ENCODE measurements at regions of chr1 and their contacts with region 1.

Region 1: GRCh38 chr1:40032240-40032891 is 8.2 kb upstream of the CAP1 start:
- DNase-seq: peak in 3 of 5 donors; percentile 41 to 55 (median 46)
- ATAC-seq: peak in 1 of 4 donors; percentile 26
- H3K4me3 ChIP-seq: no peak overlapping the region
- H3K27ac ChIP-seq: no peak overlapping the region
- H3K4me1 ChIP-seq: peaks cover 3 to 55% (median 21%) of the 10 kb centered on the region in 12 donors
- H3K27me3 ChIP-seq: no peaks in the 10 kb centered on the region
- CTCF ChIP-seq: peak; percentile 48 to 81 (median 65)
- POLR2A ChIP-seq: no peak

Region 2: GRCh38 chr1:39816415-39817090 is 215.8 kb before region 1 on chr1:
- intact Hi-C with region 1: loop called in 6 of 10 experiments (anchors 5 kb)
- DNase-seq: peak; percentile 41 to 85 (median 51)
- ATAC-seq: peak; percentile 53 to 86 (median 82)
- H3K4me3 ChIP-seq: no peak overlapping the region
- H3K27ac ChIP-seq: no peak overlapping the region
- H3K4me1 ChIP-seq: peaks cover 0 to 3% (median 0%) of the 10 kb centered on the region in 12 donors
- H3K27me3 ChIP-seq: peaks cover 0 to 17% (median 0%) of the 10 kb centered on the region in 9 donors
- CTCF ChIP-seq: peak; percentile 64 to 88 (median 78)
- POLR2A ChIP-seq: no peak

Region 3: DNA sequence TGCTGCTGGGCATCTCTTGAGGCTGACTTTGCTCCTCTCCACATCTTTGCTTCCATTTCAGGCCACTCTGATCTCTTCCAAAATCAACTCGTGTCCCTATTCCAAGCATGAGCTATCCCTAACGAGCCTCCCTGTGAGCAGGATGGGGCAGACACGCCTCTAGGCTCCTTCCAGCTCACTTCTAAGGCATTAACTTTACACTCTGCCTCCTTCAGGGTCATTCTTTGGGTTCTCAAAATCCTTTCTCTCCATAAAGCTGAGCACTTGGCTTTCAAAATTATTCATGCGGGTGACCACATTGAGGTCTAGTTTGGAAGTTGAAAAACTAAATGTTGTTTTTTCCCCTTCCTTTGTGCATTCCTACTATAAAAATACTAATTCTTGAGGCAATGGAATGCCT is 210.3 kb before region 1 on chr1:
- intact Hi-C with region 1: loop called in 6 of 10 experiments (anchors 5 kb)
- DNase-seq: no peak
- ATAC-seq: no peak
- H3K4me3 ChIP-seq: no peak overlapping the region
- H3K27ac ChIP-seq: no peak overlapping the region
- H3K4me1 ChIP-seq: peaks cover 0 to 3% (median 0%) of the 10 kb centered on the region in 12 donors
- H3K27me3 ChIP-seq: peaks cover 0 to 22% (median 0%) of the 10 kb centered on the region in 9 donors
- CTCF ChIP-seq: no peak
- POLR2A ChIP-seq: no peak

Region 4: GRCh38 chr1:39901698-39902459 is 130.5 kb before region 1 on chr1 and contains the start of gene MYCL:
- intact Hi-C with region 1: loop called in 1 of 10 experiments (anchors 5 kb)
- DNase-seq: peak; percentile 53 to 83 (median 69)
- ATAC-seq: peak; percentile 65 to 88 (median 84)
- H3K4me3 ChIP-seq: peak within 1 kb of the TSS; percentile 43 to 78 (median 58)
- H3K27ac ChIP-seq: peak within 1 kb of the TSS in 3 of 12 donors; percentile 31 to 53 (median 42)
- H3K4me1 ChIP-seq: peaks cover 0 to 29% (median 9%) of the 10 kb centered on the region in 12 donors
- H3K27me3 ChIP-seq: peaks cover 0 to 73% (median 21%) of the 10 kb centered on the region in 9 donors
- CTCF ChIP-seq: peak; percentile 44 to 75 (median 71)
- POLR2A ChIP-seq: no peak
- total RNA-seq, gene MYCL: 0.27 to 3.0 (median 0.75) TPM

Region 5: DNA sequence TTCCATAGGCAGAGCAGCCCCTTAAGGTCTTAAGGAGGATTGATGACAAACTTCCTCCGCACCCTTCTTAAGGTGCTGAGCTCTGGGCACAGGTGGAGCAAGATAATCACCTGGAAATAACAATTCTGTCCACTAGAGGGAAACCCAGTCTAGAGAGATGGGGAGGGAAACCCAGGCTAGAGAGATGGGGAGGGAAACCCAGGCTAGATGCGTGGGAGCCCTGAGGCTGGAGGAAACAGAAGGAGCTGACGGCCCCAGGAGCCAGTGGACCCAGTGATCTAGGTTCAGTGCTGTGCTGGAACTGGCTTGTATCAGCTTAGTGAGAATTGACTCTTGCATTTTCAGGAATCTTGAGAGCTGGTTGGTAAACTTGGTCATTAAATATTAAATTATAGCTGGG is 112.8 kb before region 1 on chr1:
- intact Hi-C with region 1: loop called in 1 of 10 experiments (anchors 5 kb)
- DNase-seq: peak in 1 of 5 donors; percentile 24
- ATAC-seq: peak; percentile 58 to 86 (median 82)
- H3K4me3 ChIP-seq: no peak overlapping the region
- H3K27ac ChIP-seq: no peak overlapping the region
- H3K4me1 ChIP-seq: peaks cover 0 to 3% (median 0%) of the 10 kb centered on the region in 12 donors
- H3K27me3 ChIP-seq: peaks cover 0 to 21% (median 5%) of the 10 kb centered on the region in 9 donors
- CTCF ChIP-seq: peak in 11 of 12 donors; percentile 29 to 53 (median 43)
- POLR2A ChIP-seq: no peak

Region 6: GRCh38 chr1:39973503-39974135 is 58.7 kb before region 1 on chr1:
- intact Hi-C with region 1: loop called in 3 of 10 experiments (anchors 5 to 10 kb)
- DNase-seq: peak; percentile 55 to 85 (median 75)
- ATAC-seq: peak; percentile 63 to 86 (median 84)
- H3K4me3 ChIP-seq: no peak overlapping the region
- H3K27ac ChIP-seq: no peak overlapping the region
- H3K4me1 ChIP-seq: peaks cover 0 to 5% (median 0%) of the 10 kb centered on the region in 12 donors
- H3K27me3 ChIP-seq: no peaks in the 10 kb centered on the region
- CTCF ChIP-seq: peak; percentile 93 to 99 (median 96)
- POLR2A ChIP-seq: no peak

Measured in heart left ventricle (tissue), 16 donors.